ENCODE measurements at regions of chr13 and their contacts with region 1.

Region 1: DNA sequence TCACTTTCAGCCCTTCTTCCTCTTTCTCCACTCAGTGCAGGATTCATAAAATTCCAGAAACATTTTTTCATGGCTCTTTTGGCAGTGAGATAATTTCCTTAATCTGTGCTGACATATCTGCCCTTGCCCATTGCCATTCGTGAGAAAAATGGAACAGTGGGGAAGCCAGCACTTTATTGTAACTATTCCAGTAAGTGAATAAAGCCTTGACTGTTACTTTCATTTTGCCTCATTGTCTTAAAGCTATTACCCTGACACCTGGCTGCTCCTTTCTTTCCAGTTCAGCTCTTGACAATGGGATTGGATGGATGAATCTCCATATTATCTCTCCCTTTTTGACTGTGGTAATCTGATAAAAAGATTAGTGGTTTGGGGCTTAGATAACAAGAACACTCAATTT is 1068.1 kb upstream of the PCDH20 start:
- DNase-seq: no peak
- ATAC-seq: no peak
- H3K4me3 ChIP-seq: no peak overlapping the region
- H3K4me3 Mint-ChIP-seq: no peak overlapping the region
- H3K27ac ChIP-seq: no peak overlapping the region
- H3K27ac Mint-ChIP-seq: no peak overlapping the region
- H3K4me1 ChIP-seq: no peaks in the 10 kb centered on the region
- H3K4me1 Mint-ChIP-seq: no peaks in the 10 kb centered on the region
- H3K27me3 ChIP-seq: no peaks in the 10 kb centered on the region
- H3K27me3 Mint-ChIP-seq: no peaks in the 10 kb centered on the region

Region 2: GRCh38 chr13:62524061-62524460 is 40.3 kb after region 1 on chr13:
- CTCF ChIA-PET with region 1: no interaction called
- POLR2A ChIA-PET with region 1: interaction called in 1 of 2 experiments, 11 read pairs
- DNase-seq: no peak
- ATAC-seq: no peak
- H3K4me3 ChIP-seq: no peak overlapping the region
- H3K4me3 Mint-ChIP-seq: no peak overlapping the region
- H3K27ac ChIP-seq: no peak overlapping the region
- H3K27ac Mint-ChIP-seq: no peak overlapping the region
- H3K4me1 ChIP-seq: no peaks in the 10 kb centered on the region
- H3K4me1 Mint-ChIP-seq: no peaks in the 10 kb centered on the region
- H3K27me3 ChIP-seq: no peaks in the 10 kb centered on the region
- H3K27me3 Mint-ChIP-seq: no peaks in the 10 kb centered on the region

Measured in T-cell (primary cell).